A549 (cell line): ENCODE measurements at regions of chr12 and their contacts with region 1.

Region 1: GRCh38 chr12:8544295-8544694 is 3.6 kb upstream of the CLEC4E start:
- DNase-seq: peak; percentile 44 to 66
- ATAC-seq: peak; percentile 84 to 95
- H3K4me3 ChIP-seq: no peak overlapping the region
- H3K27ac ChIP-seq: no peak overlapping the region
- H3K4me1 ChIP-seq: no peaks in the 10 kb centered on the region
- CTCF ChIP-seq: peak; percentile 82
- EP300 ChIP-seq: no peak
- POLR2A ChIP-seq: no peak
- RAD21 ChIP-seq: peak; percentile 72 to 76

Region 2: DNA sequence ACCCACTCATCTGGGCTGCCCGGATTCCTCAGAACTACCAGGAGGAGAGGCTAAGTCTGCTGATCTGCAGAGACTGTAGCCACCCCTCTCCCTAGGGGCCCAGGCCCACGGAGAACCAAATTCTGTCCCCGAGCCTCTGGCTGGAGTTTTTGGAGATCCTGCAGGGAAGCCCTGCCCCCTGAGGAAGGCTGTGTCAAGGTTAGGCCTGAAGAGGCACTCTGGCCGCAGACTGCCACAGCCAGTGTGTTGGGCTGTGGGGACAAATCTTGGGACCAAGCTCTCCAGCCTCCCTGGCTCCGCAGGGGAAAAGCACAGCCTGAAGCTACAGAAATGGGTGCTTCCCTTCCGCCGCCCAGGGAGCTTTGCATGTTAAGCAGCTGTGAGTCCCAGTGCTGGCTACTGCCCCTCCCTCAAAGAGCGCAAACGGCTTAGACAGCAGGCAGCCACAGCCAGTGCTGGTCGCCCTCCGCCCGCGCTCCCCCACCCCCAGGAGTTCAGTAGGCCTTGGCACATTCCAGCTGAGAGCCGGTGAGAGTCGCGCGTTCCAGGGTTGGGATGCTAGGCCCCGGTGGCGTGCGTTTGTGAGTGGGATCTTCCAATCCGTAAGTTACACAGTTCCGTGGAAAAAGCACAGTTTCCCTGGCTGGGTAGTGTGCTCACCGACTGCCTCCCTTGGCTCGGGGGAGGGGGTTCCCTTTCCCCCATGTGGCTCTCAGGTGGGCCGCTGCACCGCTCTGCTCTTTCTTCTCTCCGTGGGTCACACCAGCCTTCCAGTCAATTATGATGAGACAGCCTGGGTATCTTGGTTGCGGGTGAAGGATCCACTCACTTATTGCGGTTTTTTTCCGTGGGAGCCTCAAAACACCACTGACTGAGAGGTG is 16.8 kb before region 1 on chr12:
- CTCF ChIA-PET with region 1: interaction called, 10 read pairs
- POLR2A ChIA-PET with region 1: no interaction called
- DNase-seq: no peak
- ATAC-seq: no peak
- H3K4me3 ChIP-seq: no peak overlapping the region
- H3K27ac ChIP-seq: no peak overlapping the region
- H3K4me1 ChIP-seq: no peaks in the 10 kb centered on the region
- CTCF ChIP-seq: no peak
- EP300 ChIP-seq: no peak
- POLR2A ChIP-seq: no peak
- RAD21 ChIP-seq: no peak

Region 3: GRCh38 chr12:8554451-8555195 is 10.3 kb after region 1 on chr12:
- CTCF ChIA-PET with region 1: interaction called, 24 read pairs
- POLR2A ChIA-PET with region 1: no interaction called
- DNase-seq: peak in 1 of 2 experiments; percentile 12
- ATAC-seq: no peak; a peak in 1 of 6 replicates
- H3K4me3 ChIP-seq: no peak overlapping the region
- H3K27ac ChIP-seq: no peak overlapping the region
- H3K4me1 ChIP-seq: no peaks in the 10 kb centered on the region
- CTCF ChIP-seq: no peak
- EP300 ChIP-seq: no peak
- POLR2A ChIP-seq: no peak
- RAD21 ChIP-seq: no peak

Region 4: DNA sequence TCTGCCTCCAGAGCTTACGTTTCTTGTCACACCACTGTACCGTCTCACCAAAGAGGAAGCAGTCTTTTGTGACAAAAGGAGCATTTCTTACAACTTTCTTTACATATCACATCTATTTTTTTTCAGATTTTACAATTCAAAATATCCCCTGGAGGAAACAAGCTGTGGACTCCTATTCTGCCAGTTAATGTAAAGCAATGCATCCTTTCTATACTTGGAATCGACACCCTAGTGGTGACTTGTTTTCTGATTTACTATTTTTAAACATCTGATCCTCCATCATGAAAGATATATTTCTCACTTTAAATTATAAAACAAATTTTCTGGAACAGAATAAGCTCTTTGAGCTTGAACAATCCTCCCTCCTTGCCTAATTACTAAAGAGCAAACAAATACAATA is 33.6 kb after region 1 on chr12:
- CTCF ChIA-PET with region 1: interaction called, 13 read pairs
- POLR2A ChIA-PET with region 1: no interaction called
- DNase-seq: no peak
- ATAC-seq: no peak
- H3K4me3 ChIP-seq: no peak overlapping the region
- H3K27ac ChIP-seq: no peak overlapping the region
- H3K4me1 ChIP-seq: no peaks in the 10 kb centered on the region
- CTCF ChIP-seq: no peak
- EP300 ChIP-seq: no peak
- POLR2A ChIP-seq: no peak
- RAD21 ChIP-seq: no peak

Region 5: GRCh38 chr12:8609061-8609570 is 64.8 kb after region 1 on chr12:
- CTCF ChIA-PET with region 1: interaction called, 68 read pairs
- POLR2A ChIA-PET with region 1: no interaction called
- DNase-seq: peak; percentile 47 to 60
- ATAC-seq: peak; percentile 77 to 86; a peak in 5 of 6 replicates
- H3K4me3 ChIP-seq: no peak overlapping the region
- H3K27ac ChIP-seq: peak overlapping the region; percentile 52 to 67; a peak in 5 of 6 replicates
- H3K4me1 ChIP-seq: peaks cover 6% of the 10 kb centered on the region; the same call in 1 of the 3 replicates
- CTCF ChIP-seq: peak; percentile 28; the same call in 2 of the 3 replicates
- EP300 ChIP-seq: no peak
- POLR2A ChIP-seq: no peak
- RAD21 ChIP-seq: peak; percentile 63 to 77